ENCODE measurements at regions of chr17 and their contacts with region 1.

Region 1: DNA sequence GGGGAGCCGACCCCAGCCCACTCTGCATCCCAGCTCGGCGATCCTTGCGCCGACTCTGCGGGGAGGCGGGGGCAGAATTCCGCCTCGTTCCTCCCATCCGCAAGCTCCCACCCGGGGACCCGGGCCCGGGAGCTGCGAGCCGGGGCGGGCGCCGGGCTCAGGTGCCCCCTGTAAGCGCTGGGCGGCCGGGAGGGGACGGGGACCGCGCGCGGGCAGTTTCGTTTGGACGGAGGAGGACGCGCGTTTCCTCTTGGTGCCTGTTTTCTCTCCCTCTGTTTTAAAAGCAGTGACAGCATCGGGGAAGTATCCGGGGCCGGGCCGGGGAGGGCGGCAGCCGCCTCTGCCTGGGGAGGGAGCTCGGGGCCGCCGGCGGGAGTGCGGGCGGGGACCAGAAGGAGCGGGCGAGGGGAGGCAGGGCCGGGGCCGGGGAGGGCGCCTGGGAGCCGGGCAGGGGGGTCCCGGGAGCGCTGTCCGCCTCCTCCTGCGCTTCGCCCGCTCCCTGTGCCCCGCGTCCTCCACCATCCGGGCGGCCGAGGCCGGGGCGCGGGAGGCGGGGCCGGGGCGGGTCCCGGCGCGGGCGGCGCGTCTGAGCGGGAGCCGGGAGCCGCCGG is 57.0 kb downstream of the RAP1GAP2 start:
- DNase-seq: peak; percentile 60
- H3K4me3 ChIP-seq: peak overlapping the region; percentile 58 to 90 (median 83)
- H3K27ac ChIP-seq: peak overlapping the region; percentile 35
- H3K4me1 ChIP-seq: peaks cover 17% of the 10 kb centered on the region
- H3K27me3 ChIP-seq: no peaks in the 10 kb centered on the region
- CTCF ChIP-seq: no peak

Region 2: DNA sequence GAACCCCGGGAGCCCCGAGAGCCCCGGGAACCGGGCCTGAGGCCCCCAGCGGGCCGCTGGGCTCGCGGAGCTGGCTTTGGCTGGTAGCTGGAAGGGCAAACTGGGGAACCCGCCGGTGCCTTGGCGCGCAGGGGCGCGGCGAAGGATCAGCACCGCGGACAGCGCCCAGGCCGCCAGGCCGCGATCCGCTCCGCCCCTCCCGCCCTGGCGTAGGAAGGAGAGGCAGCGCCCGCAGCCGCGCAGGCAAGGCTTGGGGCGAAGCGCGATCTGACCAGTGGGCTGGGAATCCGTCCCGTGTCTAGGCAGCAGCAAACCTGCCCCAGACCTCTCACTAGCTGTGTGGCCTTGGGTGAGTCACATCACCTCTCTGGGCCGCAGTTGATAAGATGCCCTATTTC is 103.4 kb before region 1 on chr17:
- CTCF ChIA-PET with region 1: no interaction called
- dilution Hi-C with region 1: loop called (anchors 5 kb)
- in situ Hi-C with region 1: no loop called
- intact Hi-C with region 1: no loop called
- DNase-seq: peak; percentile 67
- H3K4me3 ChIP-seq: no peak overlapping the region
- H3K27ac ChIP-seq: no peak overlapping the region
- H3K4me1 ChIP-seq: peaks cover 3% of the 10 kb centered on the region
- H3K27me3 ChIP-seq: peaks cover 4% of the 10 kb centered on the region
- CTCF ChIP-seq: no peak

Region 3: DNA sequence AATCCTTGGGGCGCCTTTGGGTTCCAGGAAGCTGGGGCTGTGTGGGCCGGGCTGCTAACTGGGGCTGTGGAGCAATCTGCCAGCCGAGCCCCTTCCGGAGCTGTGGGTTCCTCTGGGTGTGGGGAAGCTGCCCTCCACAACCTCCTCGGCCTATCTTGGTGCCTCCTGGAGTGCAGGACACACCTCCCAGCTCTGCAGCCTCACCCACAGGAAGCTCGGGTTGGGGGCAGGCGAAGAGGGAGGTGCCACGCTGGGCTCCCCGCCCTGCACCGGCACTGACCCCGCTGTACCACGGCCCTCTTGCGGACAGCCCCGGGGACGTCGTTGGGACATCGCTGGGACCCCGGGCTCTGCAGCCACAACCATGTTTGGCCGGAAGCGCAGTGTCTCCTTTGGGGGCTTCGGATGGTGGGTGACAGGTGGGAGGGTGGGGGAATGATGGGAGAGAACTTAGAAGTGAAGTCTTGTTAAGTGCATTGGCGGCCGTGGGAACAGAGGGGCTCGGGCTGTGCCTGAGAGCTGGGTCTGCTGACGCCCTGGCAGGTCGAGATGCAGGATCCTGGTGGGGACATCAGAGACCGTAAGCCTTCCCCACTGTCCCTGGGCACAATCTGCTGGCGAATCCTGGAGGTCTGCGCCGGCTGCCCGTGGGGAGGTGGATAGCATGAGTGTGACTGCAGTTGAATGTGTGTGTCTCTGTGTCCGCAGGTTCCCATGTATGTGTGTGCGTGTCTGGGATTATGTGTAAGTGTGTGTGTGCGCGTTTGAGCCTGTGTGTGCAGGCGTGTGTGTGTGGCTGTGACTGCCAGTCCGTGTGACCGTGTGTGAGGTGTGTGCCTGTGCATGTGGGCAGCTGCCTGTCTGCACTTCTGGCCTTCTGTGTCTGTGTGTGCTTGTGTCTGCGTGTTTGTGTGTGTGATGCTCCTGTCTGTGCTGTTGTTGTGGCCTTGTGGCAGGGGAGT is 56.8 kb before region 1 on chr17 and contains the start of gene RAP1GAP2:
- CTCF ChIA-PET with region 1: no interaction called
- dilution Hi-C with region 1: loop called (anchors 5 kb)
- in situ Hi-C with region 1: no loop called
- intact Hi-C with region 1: no loop called
- DNase-seq: no peak
- H3K4me3 ChIP-seq: no peak within 1 kb of the TSS
- H3K27ac ChIP-seq: no peak within 1 kb of the TSS
- H3K4me1 ChIP-seq: no peaks in the 10 kb centered on the region
- H3K27me3 ChIP-seq: no peaks in the 10 kb centered on the region
- CTCF ChIP-seq: no peak
- total RNA-seq, gene RAP1GAP2: 22.3 to 41.2 TPM

Region 4: DNA sequence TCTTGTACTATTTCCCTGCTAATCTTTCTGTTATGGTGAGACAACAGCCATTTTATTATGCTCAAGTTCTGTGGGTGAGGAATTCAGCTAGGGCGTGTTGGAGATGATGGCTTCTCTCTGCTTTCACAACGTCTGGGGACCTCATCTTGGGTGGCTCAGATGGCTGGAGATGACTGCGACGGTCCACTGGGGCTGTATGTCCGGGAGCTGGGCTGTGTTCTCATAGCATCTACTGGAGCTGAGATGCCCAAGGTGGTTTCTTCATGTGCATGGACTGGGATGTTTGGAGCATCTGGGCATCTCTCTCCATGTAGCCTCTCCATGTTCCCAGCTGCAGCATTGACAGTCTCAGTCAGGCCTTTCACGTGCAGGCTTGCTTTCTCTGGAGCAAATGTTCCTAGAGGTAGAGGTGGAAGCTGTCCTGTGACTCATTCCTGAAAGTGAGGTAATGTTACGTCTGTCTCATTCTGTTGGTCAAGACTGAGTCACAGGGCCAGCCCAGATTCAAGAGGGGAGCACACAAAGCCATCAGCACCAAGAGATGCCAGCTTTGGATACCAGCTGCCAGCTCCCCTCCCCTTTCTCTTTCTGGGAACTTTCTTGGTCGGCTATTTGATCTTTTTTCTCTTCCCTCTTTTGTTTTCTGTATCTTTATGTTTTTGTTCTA is 39.2 kb after region 1 on chr17:
- CTCF ChIA-PET with region 1: no interaction called
- dilution Hi-C with region 1: no loop called
- in situ Hi-C with region 1: no loop called
- intact Hi-C with region 1: loop called (anchors 1 kb)
- DNase-seq: peak; percentile 98
- H3K4me3 ChIP-seq: no peak overlapping the region
- H3K27ac ChIP-seq: peak overlapping the region; percentile 72
- H3K4me1 ChIP-seq: peaks cover 31% of the 10 kb centered on the region
- H3K27me3 ChIP-seq: no peaks in the 10 kb centered on the region
- CTCF ChIP-seq: no peak

Region 5: DNA sequence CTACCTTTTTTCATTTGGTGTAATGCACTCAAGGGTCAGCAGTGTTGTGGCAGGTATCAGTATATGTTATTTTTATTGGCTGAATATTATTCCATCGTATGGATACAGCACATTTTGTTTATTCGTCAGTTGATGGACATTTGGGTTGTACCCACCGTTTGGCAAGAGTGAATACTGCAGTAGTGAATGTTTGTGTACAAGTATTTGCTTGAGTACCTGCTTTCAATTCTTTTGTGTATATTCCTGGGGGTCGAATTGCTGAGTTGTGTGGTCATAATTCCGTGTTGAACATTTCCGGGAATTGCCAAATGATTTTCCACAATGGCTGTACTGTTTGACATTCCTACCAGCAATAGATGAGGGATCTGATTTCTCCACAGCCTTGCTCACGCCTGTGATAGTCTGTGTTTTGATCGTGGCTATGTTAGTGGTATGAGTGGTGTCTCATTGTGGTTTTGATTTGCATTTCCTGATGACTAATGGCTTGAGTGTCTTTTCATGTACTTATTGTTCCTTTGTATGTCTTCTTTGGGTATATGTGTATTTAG is 101.8 kb after region 1 on chr17:
- CTCF ChIA-PET with region 1: no interaction called
- dilution Hi-C with region 1: no loop called
- in situ Hi-C with region 1: no loop called
- intact Hi-C with region 1: loop called (anchors 1 kb)
- DNase-seq: peak; percentile 98
- H3K4me3 ChIP-seq: peak overlapping the region in 2 of 3 experiments; percentile 5 to 25
- H3K27ac ChIP-seq: peak overlapping the region; percentile 77
- H3K4me1 ChIP-seq: peaks cover 48% of the 10 kb centered on the region
- H3K27me3 ChIP-seq: no peaks in the 10 kb centered on the region
- CTCF ChIP-seq: no peak

Region 6: DNA sequence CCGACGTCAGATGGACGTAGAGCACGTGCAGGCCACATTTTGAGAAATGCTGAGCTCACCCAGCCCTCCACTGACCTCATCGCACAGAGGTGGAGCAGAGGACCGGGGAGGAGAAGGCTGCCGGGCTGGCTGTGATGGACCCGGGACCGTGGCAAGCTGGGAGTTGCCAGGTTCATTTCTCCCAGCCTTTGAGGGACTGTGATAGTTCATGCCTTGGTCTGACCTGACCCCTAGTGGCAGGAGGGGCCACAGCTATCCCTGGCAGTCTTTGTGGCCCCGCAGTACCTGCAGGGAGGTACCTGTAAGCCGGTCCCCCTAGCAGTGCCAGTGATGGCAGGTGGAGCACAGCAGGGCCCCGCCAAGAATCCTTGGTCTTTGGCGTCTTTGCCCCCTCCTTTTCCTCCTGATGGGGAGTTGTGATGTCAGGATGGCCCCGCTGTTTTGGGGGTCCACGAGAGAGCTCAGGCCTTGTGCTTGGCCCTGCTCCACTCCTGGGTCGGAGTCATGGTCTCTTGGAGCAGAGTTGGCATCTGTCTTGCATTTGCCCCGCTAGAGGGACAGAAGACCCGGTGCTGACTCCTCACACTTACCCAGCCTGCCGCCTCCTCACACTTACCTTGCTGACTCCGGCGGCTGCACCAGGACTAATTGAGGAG is 159.8 kb after region 1 on chr17:
- CTCF ChIA-PET with region 1: interaction called, 4 read pairs
- dilution Hi-C with region 1: loop called (anchors 5 kb)
- in situ Hi-C with region 1: loop called (anchors 10 to 25 kb)
- intact Hi-C with region 1: loop called (anchors 1 kb)
- DNase-seq: peak; percentile 26
- H3K4me3 ChIP-seq: no peak overlapping the region
- H3K27ac ChIP-seq: no peak overlapping the region
- H3K4me1 ChIP-seq: no peaks in the 10 kb centered on the region
- H3K27me3 ChIP-seq: no peaks in the 10 kb centered on the region
- CTCF ChIP-seq: peak; percentile 63 to 64

Region 7: GRCh38 chr17:3282901-3283300 is 429.7 kb after region 1 on chr17:
- CTCF ChIA-PET with region 1: no interaction called
- dilution Hi-C with region 1: no loop called
- in situ Hi-C with region 1: no loop called
- intact Hi-C with region 1: no loop called
- DNase-seq: no peak
- H3K4me3 ChIP-seq: no peak overlapping the region
- H3K27ac ChIP-seq: no peak overlapping the region
- H3K4me1 ChIP-seq: no peaks in the 10 kb centered on the region
- H3K27me3 ChIP-seq: no peaks in the 10 kb centered on the region
- CTCF ChIP-seq: no peak

Measured in mammary epithelial cell (primary cell).